ENCODE measurements at regions of chrX and their contacts with region 1.

Region 1: DNA sequence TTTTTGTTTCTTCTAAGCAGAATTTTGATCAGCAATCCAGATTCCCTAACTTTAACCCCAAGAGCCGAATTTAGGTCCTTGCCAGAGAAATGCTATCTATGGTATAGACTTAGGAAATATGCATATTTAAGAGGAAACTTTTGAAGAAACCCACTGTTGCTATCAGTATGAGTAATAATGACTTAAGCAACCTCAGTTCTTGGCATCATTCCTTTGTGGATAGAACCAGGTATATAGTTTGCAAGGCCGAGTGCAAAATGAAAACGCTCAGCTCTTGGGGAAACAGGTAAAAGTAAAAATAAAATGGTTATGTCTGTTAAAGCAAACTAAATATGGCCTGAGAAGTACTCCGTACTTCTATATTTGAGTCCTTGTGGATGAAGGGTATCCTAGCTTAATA is 78.1 kb downstream of the ARSF start:
- DNase-seq: no peak
- H3K4me3 ChIP-seq: no peak overlapping the region
- H3K27ac ChIP-seq: no peak overlapping the region
- H3K27me3 ChIP-seq: no peaks in the 10 kb centered on the region
- CTCF ChIP-seq: no peak

Region 2: GRCh38 chrX:3548765-3549391 is 429.5 kb after region 1 on chrX:
- CTCF ChIA-PET with region 1: interaction called, 16 read pairs
- POLR2A ChIA-PET with region 1: no interaction called
- DNase-seq: peak; percentile 62
- H3K4me3 ChIP-seq: peak overlapping the region; percentile 40
- H3K27ac ChIP-seq: peak overlapping the region; percentile 75
- H3K27me3 ChIP-seq: no peaks in the 10 kb centered on the region
- CTCF ChIP-seq: peak; percentile 47

Measured in AG04450 (cell line).